Psoas muscle (tissue), 8 donors: ENCODE measurements at regions of chr17 and their contacts with region 1.

Region 1: GRCh38 chr17:56319517-56319916 is 166.2 kb downstream of the ANKFN1 start:
- DNase-seq: no peak
- ATAC-seq: peak; percentile 75 to 92 (median 82)
- H3K4me3 ChIP-seq: no peak overlapping the region
- H3K27ac ChIP-seq: no peak overlapping the region
- H3K4me1 ChIP-seq: no peaks in the 10 kb centered on the region
- H3K27me3 ChIP-seq: peaks cover 0 to 4% (median 0%) of the 10 kb centered on the region in 3 donors
- CTCF ChIP-seq: peak; percentile 69

Region 2: GRCh38 chr17:55845385-55845784 is 474.1 kb before region 1 on chr17:
- intact Hi-C with region 1: loop called in 1 of 2 experiments (anchors 2 kb)
- DNase-seq: peak; percentile 64 to 81
- ATAC-seq: peak; percentile 63 to 88 (median 81)
- H3K4me3 ChIP-seq: peak overlapping the region; percentile 48
- H3K27ac ChIP-seq: no peak overlapping the region
- H3K4me1 ChIP-seq: no peaks in the 10 kb centered on the region
- H3K27me3 ChIP-seq: no peaks in the 10 kb centered on the region
- CTCF ChIP-seq: peak; percentile 53

Region 3: DNA sequence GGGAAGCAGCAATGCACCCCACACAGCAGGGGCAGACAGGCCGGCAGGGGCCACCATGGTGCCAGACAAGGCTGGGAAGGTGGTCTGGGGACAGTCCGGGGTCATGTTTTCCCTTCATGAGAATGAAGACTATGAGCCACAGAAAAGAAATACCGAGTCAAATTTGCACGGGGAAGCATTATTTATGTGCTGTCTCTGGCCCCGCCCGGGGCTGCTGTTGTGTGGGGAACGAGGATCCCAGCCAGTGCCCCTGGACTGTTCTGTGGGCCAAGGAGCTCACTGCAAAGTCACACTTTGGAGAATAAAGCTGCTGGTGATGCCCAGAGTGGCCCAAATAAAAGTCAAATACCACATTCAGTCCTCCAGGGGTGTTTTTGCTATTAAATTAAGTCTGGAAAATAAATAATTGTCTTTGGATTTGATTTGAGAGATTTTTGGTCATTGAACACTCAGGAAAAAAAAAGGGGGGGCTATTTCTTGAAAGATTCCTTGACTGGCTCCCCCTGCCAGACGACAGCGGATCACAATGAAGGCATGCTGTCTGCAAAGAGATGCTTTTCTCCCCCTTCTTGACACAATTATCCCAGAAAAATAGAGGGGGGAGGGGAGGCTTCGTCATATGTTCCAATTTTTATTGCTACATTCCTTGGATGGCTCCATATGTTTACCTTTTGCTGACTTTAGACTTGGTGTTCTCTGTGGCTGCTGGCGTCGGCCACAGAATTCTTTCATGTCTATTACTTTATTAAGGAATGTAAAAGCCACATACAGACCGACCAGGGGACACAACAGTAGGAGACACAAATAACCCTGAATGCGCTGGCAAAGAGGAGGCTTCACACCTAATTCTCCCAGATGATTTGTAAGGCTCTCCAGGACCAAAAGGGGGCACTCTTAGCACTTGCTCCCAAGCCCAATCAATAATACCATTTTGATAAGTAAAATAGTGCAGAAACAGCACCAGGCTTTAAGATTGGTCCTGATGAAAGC is 193.4 kb before region 1 on chr17:
- intact Hi-C with region 1: loop called (anchors 2 to 5 kb)
- DNase-seq: no peak
- ATAC-seq: peak; percentile 58 to 75 (median 63)
- H3K4me3 ChIP-seq: no peak overlapping the region
- H3K27ac ChIP-seq: no peak overlapping the region
- H3K4me1 ChIP-seq: no peaks in the 10 kb centered on the region
- H3K27me3 ChIP-seq: no peaks in the 10 kb centered on the region
- CTCF ChIP-seq: peak; percentile 60

Region 4: DNA sequence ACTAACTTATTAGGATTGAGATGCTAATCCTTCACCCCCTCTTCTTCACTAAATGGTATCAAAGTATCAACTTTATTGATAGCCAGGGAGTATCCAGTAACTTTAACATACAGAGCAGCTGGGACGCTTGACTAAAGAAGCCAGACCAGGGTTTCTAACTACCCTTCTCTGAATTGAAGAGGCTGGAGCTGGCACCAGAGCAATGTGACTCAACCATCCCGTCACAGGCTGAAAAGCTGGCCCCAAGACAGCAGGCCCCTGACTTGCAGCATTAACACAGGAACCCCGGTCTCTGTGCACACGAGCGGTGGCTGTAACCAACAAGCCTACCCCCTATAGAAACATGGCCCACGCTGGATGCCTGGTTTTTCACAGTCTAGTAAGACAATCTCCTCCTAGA is 106.5 kb before region 1 on chr17:
- intact Hi-C with region 1: no loop called
- DNase-seq: no peak
- ATAC-seq: no peak
- H3K4me3 ChIP-seq: no peak overlapping the region
- H3K27ac ChIP-seq: no peak overlapping the region
- H3K4me1 ChIP-seq: no peaks in the 10 kb centered on the region
- H3K27me3 ChIP-seq: no peaks in the 10 kb centered on the region
- CTCF ChIP-seq: no peak